Activated CD8-positive, alpha-beta memory T cell treated with anti-CD3 and anti-CD28 coated beads, Interleukin-2, amount 10 ng/mL, durations not matched to agents 7 days and 5 days (primary cell): ENCODE measurements at regions of chr1 and their contacts with region 1.

Region 1: DNA sequence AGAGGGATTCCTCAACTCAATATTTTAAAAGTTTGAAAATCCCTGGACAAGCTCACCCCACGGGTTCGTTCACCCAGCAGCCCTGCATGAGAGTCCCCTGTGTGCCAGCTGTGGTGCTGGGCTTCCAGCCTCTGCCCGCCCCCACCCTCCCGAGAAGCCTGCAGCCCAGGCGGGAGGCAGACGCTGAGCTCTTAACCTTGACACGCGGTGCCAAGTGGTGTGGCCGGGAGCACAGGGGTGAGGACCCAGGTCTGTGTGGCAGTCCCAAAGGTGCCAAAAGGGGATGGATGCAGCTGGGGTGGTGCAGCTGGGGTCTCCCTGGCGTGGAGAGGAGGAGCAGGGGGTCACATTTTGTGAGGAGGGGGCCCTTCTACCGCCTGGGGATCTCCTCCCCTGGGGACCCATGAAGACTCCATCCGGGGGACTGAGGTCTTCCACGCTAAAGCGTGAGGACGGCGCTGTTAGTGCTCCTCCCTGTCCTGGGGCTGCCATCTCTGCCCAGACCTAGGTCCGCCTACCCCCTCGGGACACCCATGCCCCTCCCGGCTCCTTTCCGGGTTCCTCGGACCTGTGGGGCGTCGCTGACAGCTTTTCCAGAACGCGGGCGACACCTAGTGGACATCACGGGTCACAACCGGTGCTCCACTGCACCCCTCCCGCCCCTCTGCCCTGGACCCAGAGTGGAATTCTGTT is 12.9 kb downstream of the PLA2G2F start:
- DNase-seq: peak; percentile 84
- ATAC-seq: peak; percentile 92
- H3K4me3 Mint-ChIP-seq: peak overlapping the region; percentile 54
- H3K27ac Mint-ChIP-seq: peak overlapping the region; percentile 51
- H3K4me1 Mint-ChIP-seq: peaks cover 16% of the 10 kb centered on the region
- H3K27me3 Mint-ChIP-seq: no peaks in the 10 kb centered on the region

Region 2: GRCh38 chr1:19882111-19883071 is 269.7 kb before region 1 on chr1 and contains the start of gene OTUD3:
- CTCF ChIA-PET with region 1: interaction called, 12 read pairs
- DNase-seq: peak; percentile 97
- ATAC-seq: peak; percentile 96
- H3K4me3 Mint-ChIP-seq: peak within 1 kb of the TSS; percentile 79
- H3K27ac Mint-ChIP-seq: peak within 1 kb of the TSS; percentile 22
- H3K4me1 Mint-ChIP-seq: peaks cover 28% of the 10 kb centered on the region
- H3K27me3 Mint-ChIP-seq: peaks cover 10% of the 10 kb centered on the region
- total RNA-seq, gene OTUD3: 7.3 to 8.1 TPM

Region 3: GRCh38 chr1:19918057-19918456 is 234.0 kb before region 1 on chr1:
- CTCF ChIA-PET with region 1: interaction called, 38 read pairs
- DNase-seq: peak; percentile 84
- ATAC-seq: peak; percentile 74
- H3K4me3 Mint-ChIP-seq: no peak overlapping the region
- H3K27ac Mint-ChIP-seq: no peak overlapping the region
- H3K4me1 Mint-ChIP-seq: no peaks in the 10 kb centered on the region
- H3K27me3 Mint-ChIP-seq: no peaks in the 10 kb centered on the region

Region 4: DNA sequence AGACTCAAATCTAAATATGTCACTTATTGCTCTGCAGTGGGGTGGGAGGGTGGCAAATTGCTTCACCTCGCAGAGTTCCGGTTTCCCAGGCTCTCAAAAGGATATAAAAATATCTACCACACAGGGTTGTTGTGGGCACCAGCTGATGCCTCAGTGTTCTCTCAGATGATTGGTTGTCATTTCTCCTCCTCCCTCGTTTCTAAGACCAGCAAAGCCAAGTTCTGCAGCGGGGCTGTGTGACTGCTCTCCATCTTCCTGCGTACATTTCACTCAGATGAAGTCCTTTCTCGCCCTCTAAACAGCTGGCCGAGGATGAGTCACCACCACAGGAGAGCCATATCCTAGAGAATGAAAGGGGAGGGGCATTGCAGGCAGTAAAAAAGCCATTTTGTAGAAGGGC is 103.6 kb after region 1 on chr1:
- CTCF ChIA-PET with region 1: no interaction called
- DNase-seq: no peak
- ATAC-seq: peak; percentile 16
- H3K4me3 Mint-ChIP-seq: no peak overlapping the region
- H3K27ac Mint-ChIP-seq: no peak overlapping the region
- H3K4me1 Mint-ChIP-seq: peaks cover 4% of the 10 kb centered on the region
- H3K27me3 Mint-ChIP-seq: peaks cover 25% of the 10 kb centered on the region